GM12878 (cell line): ENCODE measurements at regions of chr4 and their contacts with region 1.

Region 1: GRCh38 chr4:102543030-102543928 is 42.1 kb downstream of the NFKB1 start:
- DNase-seq: peak; percentile 76
- ATAC-seq: peak; percentile 80
- H3K4me3 ChIP-seq: no peak overlapping the region
- H3K27ac ChIP-seq: peak overlapping the region; percentile 60
- H3K4me1 ChIP-seq: peaks cover 47% of the 10 kb centered on the region
- H3K27me3 ChIP-seq: no peaks in the 10 kb centered on the region
- CTCF ChIP-seq: no peak
- EP300 ChIP-seq: peak in 1 of 2 experiments; percentile 78; a peak in 3 of 4 replicates
- POLR2A ChIP-seq: no peak
- RAD21 ChIP-seq: no peak

Region 2: DNA sequence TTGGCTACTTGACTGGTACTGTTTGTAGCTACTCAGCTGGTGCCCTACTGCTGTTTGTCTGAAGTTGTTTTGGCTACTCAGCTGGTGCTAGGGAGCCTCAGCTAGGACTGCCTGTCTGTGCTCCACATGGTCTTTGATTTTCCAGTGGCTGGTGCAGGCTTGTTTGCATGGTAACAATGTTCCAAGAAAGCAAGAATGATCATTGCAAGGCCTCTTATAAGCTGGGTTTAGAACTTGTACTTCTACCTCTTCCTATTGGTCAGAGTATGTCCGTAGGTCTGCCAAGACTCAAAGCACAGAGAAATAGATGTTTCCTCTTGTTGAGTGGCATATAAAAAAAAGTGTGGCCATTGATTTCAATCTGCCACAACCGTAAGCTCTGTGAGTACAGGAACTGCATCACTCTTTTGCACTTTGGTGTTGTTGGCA is 24.6 kb before region 1 on chr4:
- CTCF ChIA-PET with region 1: interaction called, 3 read pairs
- POLR2A ChIA-PET with region 1: interaction called, 7 read pairs
- RAD21 ChIA-PET with region 1: interaction called, 13 read pairs
- SMC1A ChIA-PET with region 1: interaction called, 54 read pairs
- in situ Hi-C with region 1: no loop called
- intact Hi-C with region 1: no loop called
- DNase-seq: no peak
- ATAC-seq: peak; percentile 46
- H3K4me3 ChIP-seq: no peak overlapping the region
- H3K27ac ChIP-seq: no peak overlapping the region
- H3K4me1 ChIP-seq: peaks cover 10% of the 10 kb centered on the region; the same call in 1 of the 2 replicates
- H3K27me3 ChIP-seq: no peaks in the 10 kb centered on the region
- CTCF ChIP-seq: no peak
- EP300 ChIP-seq: no peak
- POLR2A ChIP-seq: no peak
- RAD21 ChIP-seq: no peak

Region 3: GRCh38 chr4:102554482-102554881 is 11.2 kb after region 1 on chr4:
- CTCF ChIA-PET with region 1: interaction called, 8 read pairs
- POLR2A ChIA-PET with region 1: interaction called, 52 read pairs
- RAD21 ChIA-PET with region 1: interaction called, 3 read pairs
- SMC1A ChIA-PET with region 1: interaction called, 81 read pairs
- in situ Hi-C with region 1: no loop called
- intact Hi-C with region 1: no loop called
- DNase-seq: no peak
- ATAC-seq: no peak
- H3K4me3 ChIP-seq: no peak overlapping the region
- H3K27ac ChIP-seq: no peak overlapping the region
- H3K4me1 ChIP-seq: peaks cover 18% of the 10 kb centered on the region
- H3K27me3 ChIP-seq: no peaks in the 10 kb centered on the region
- CTCF ChIP-seq: no peak
- EP300 ChIP-seq: no peak
- POLR2A ChIP-seq: no peak
- RAD21 ChIP-seq: no peak

Region 4: DNA sequence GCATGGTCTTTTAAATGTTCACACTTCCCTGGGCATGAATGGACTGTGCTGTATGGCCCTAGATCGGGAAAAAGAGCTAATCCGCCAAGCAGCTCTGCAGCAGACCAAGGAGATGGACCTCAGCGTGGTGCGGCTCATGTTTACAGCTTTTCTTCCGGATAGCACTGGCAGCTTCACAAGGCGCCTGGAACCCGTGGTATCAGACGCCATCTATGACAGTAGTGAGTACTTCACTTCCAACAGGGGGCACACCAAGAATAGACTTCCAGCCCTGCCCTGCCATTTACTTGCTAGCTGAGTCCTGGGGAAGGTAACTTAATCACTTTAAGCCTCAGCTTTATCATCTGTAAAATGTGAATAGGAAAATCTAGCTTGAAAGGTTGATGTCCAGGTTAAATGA is 35.5 kb after region 1 on chr4:
- CTCF ChIA-PET with region 1: interaction called, 6 read pairs
- POLR2A ChIA-PET with region 1: interaction called, 14 read pairs
- RAD21 ChIA-PET with region 1: interaction called, 9 read pairs
- SMC1A ChIA-PET with region 1: interaction called, 22 read pairs
- in situ Hi-C with region 1: no loop called
- intact Hi-C with region 1: no loop called
- DNase-seq: no peak
- ATAC-seq: no peak; the same call in 2 of the 3 replicates
- H3K4me3 ChIP-seq: no peak overlapping the region
- H3K27ac ChIP-seq: no peak overlapping the region
- H3K4me1 ChIP-seq: peaks cover 5% of the 10 kb centered on the region
- H3K27me3 ChIP-seq: no peaks in the 10 kb centered on the region
- CTCF ChIP-seq: no peak; a peak in 1 of 6 replicates
- EP300 ChIP-seq: no peak
- POLR2A ChIP-seq: no peak
- RAD21 ChIP-seq: no peak